ENCODE measurements at regions of chr2 and their contacts with region 1.

Region 1: DNA sequence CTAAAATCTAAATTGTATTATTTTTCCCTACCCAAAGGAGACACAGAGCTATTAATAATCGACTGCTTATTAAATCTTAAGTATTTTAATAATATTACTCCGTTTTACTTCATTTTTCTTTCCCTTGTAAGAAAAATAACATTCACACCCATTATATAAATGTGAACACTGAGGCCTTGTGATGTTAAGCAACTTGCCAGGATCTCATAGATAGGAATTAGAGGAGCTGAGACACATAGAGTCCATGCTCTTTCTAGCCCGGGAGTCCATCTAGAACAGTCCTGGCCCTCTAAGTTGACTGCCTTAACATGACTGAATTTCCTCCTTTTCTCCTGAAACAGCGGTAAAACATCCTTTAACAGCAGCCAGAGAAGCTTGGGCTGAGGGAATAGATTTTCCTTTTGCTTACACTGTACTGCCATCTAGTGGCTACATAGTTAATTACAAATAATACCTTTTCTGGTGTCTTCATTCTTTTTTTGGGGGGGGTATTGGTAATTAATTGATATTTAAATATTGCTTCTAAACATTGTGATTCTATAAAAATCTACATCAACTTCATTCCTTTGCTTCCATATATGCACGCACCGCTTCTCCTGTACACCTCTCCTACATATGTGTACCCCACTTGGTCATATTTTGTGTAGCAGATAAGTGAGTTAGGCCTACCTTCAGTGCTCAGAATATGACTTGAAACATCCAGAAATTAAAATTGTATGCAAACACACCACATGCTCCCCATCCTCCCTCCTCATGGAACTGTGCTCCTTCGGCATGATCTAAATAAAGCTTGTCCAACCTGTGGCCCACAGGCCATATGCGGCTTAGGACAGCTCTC is 125.8 kb upstream of the HNMT start:
- DNase-seq: no peak
- H3K4me3 ChIP-seq: no peak overlapping the region
- H3K27ac ChIP-seq: no peak overlapping the region
- H3K4me1 ChIP-seq: no peaks in the 10 kb centered on the region
- H3K27me3 ChIP-seq: no peaks in the 10 kb centered on the region
- CTCF ChIP-seq: peak; percentile 90

Region 2: DNA sequence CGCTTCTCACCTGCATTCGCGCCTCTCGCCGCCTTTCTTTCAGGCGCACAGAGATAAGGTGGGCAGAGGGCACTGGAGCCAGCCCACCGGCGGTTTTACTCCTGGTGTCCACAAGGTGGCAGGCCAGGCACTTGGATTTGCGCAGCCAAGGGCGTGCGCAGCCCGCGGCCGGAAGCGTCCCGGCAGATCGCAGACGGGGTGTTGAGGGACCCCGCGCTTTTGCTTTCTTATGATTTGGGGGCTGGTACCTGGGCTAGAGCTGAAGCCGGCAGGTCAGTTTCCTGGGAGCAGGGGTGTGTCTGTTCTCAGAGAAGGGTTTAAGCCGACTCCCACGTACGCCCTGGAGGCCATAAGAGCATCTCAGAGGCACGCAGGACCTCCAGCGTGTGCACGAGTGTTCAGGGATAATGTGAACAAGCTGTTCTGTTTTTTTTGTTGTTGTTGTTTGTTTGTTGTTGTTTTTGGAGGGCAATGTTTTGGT is 1414.9 kb before region 1 on chr2:
- CTCF ChIA-PET with region 1: no interaction called
- POLR2A ChIA-PET with region 1: no interaction called
- intact Hi-C with region 1: loop called (anchors 5 kb)
- DNase-seq: peak in 1 of 2 experiments; percentile 47
- H3K4me3 ChIP-seq: no peak overlapping the region
- H3K27ac ChIP-seq: no peak overlapping the region
- H3K4me1 ChIP-seq: no peaks in the 10 kb centered on the region
- H3K27me3 ChIP-seq: peaks cover 75% of the 10 kb centered on the region
- CTCF ChIP-seq: peak; percentile 72

Region 3: DNA sequence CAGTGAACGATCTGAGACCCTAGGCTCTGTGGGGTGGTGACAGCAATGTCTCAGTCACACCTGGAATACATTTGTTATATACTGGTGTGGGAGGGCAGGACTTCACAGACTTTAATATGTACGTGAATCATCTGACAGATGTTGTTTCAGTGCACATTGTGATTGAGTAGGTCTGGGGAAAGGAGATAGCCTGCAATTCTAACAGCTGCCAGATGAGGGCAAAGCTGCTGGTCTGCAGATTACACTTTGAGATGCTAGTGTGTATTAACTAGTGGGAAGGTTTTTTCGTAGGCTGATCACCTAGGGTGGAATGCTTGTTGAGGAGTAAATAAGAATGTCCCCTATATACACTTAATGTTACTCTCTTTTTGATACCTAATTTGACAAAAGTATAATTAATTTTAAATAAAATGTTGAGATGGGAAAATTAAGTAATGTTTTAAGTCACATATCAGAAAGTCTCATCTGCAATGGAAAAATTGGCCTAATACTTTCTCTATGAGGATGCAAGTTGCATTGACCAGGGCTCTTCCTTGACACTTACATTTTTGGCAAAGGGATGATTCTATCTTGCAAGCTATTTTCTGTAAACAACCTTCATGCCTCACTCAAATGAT is 371.1 kb before region 1 on chr2:
- CTCF ChIA-PET with region 1: no interaction called
- POLR2A ChIA-PET with region 1: no interaction called
- intact Hi-C with region 1: loop called (anchors 2 kb)
- DNase-seq: peak in 1 of 2 experiments; percentile 6
- H3K4me3 ChIP-seq: no peak overlapping the region
- H3K27ac ChIP-seq: no peak overlapping the region
- H3K4me1 ChIP-seq: no peaks in the 10 kb centered on the region
- H3K27me3 ChIP-seq: no peaks in the 10 kb centered on the region
- CTCF ChIP-seq: peak; percentile 71

Measured in PC-9 (cell line).